ENCODE measurements at regions of chr7 and their contacts with region 1.

Region 1: GRCh38 chr7:131400833-131401593 is 73.3 kb downstream of the MKLN1 start:
- DNase-seq: no peak
- ATAC-seq: no peak
- H3K4me3 ChIP-seq: no peak overlapping the region
- H3K27ac ChIP-seq: no peak overlapping the region
- H3K4me1 ChIP-seq: no peaks in the 10 kb centered on the region
- H3K27me3 ChIP-seq: no peaks in the 10 kb centered on the region

Region 2: DNA sequence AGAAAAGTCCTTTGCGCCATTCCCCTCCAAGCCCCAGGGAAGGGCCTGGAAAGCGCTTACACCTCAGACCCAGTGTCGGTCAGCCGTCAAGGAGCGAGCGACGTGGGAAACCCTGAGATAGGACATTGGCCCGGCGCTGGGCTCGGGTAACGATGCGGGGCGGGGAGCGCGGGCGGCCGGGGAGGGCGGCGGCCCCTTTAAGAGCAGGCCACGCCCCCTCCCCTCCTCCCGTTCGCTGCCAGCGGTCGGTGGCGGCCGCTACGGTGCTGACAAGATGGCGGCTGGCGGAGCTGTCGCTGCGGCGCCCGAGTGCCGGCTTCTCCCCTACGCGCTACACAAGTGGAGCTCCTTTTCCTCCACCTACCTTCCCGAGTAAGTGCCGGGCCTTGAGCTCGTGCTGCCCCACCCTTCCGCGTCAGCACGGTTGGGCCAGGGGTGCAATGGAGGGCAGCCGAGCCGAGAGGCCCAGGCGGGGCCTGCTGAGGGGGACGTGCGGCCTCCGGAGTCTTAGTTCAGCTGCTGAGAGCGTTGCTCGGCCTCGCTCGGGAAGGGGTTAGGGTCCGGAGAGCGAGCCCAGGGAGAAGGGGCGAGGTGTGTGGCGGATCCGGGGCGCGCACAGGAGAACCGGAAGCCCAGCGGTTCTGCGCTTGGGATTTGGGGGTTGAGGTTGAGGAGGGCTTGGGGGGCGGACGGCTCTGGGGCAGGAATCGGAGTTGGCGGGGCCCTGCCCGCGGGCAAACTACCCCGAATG is 73.2 kb before region 1 on chr7 and contains the start of gene MKLN1:
- intact Hi-C with region 1: loop called in 1 of 2 experiments (anchors 10 kb)
- DNase-seq: peak; percentile 95 to 97
- ATAC-seq: peak; percentile 99
- H3K4me3 ChIP-seq: peak within 1 kb of the TSS; percentile 84 to 86
- H3K27ac ChIP-seq: peak within 1 kb of the TSS; percentile 94
- H3K4me1 ChIP-seq: peaks cover 2 to 4% of the 10 kb centered on the region in 2 donors
- H3K27me3 ChIP-seq: no peaks in the 10 kb centered on the region
- total RNA-seq, gene MKLN1: 72.1 to 91.6 TPM